ENCODE measurements at regions of chr17 and their contacts with region 1.

Region 1: DNA sequence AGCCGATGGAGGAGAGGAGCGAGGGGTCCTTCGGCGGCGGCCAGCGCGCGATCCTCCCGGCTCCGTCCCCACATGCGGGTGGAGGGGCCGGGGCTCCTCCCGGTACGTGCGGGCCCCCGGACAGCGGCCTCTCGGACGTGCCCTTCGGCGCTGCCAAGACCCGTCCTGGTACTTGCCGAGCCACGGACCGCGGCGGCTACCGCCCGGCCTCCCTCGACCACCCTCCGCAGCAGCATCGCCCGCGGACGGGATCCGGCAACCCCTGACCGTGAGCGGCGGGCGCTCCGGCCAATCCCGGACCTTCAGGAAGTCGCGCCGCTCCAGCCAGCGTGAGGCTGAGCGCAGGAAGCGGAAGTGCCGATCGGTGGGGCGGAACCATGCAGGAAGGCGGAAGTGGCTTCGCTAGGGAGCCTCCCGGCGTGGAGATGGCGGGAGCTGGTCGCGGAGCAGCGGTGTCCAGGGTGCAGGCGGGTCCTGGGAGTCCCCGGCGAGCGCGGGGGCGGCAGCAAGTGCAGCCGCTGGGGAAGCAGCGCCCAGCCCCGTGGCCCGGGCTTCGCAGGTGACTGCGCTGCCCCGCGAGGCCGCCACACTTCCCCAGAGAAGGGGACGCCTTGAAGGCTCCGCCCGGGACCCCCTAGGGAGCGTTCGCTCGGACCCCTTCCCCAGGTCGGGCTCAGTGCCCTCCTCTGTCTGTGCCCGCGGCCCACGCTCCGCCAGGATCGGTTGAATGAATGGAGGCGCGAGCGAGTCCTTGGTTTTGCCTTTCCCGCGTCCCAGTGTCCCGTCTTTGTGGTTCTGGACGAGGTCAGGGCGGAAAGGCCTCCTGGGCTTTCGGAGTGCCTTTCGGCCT is at the starts of genes CCDC137 and OXLD1:
- DNase-seq: peak; percentile 96
- H3K4me3 Mint-ChIP-seq: peak within 1 kb of the TSS; percentile 94
- H3K27ac Mint-ChIP-seq: peak within 1 kb of the TSS; percentile 94
- H3K4me1 Mint-ChIP-seq: peaks cover 41% of the 10 kb centered on the region
- H3K27me3 Mint-ChIP-seq: no peaks in the 10 kb centered on the region
- total RNA-seq, gene CCDC137: 34.0 to 36.8 TPM
- total RNA-seq, gene OXLD1: 49.6 to 57.7 TPM

Region 2: DNA sequence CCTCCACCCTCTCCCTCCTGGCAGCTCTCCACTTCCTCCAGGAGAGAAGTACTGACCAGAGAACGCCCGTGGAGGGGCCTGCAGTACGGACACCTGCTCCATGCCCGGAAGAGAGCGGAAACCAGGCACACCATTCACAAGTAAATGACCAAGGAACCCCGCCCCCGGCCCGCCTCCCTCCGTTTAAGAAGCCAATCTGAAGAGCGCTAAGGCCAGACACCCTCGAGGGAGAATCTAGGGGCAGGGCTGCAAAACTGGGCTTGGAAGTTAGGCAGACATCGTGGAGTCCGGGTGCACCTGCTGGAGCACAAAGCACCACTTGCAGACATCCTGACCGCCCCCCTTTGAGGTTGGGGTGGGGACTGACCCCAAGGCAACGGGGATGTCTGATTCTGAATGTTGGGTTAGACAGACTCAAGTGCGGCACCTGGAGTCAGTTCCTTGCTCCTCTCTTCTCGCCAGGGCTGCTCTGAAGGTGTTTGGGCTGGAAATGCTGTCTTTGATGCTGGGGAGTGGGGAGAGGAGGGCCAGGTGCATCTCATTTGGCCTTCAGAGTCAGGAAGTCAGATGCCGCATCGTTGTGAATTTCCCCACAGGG is 113.5 kb before region 1 on chr17:
- CTCF ChIA-PET with region 1: no interaction called
- POLR2A ChIA-PET with region 1: interaction called, 4 read pairs
- intact Hi-C with region 1: loop called (anchors 2 kb)
- DNase-seq: peak; percentile 88
- H3K4me3 Mint-ChIP-seq: peak overlapping the region; percentile 86
- H3K27ac Mint-ChIP-seq: peak overlapping the region; percentile 88
- H3K4me1 Mint-ChIP-seq: peaks cover 33% of the 10 kb centered on the region
- H3K27me3 Mint-ChIP-seq: no peaks in the 10 kb centered on the region

Region 3: DNA sequence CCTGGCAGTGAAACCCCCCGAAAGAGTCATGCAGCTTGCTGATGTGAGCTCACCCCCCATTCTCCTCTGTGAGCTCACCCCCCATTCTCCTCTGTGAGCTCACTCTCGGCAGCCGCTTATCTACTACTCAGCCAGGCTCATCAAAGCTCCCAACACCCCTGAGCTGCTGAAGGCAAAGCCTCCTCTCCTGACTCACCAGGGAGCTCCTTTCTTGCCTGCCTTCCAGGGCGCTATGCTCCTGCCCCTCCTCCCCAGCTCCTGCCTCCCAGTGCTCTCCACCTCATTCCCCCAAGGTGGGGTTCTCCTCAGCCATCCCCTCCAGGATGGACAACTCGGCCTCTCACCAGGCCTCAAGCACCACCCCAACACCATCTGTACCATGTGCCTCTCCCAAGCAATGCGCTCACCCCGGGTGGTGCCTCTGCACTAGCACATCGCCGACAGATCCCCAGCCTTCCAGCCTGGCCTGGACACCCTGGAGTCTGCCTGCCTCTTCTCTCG is 86.7 kb before region 1 on chr17:
- CTCF ChIA-PET with region 1: no interaction called
- POLR2A ChIA-PET with region 1: no interaction called
- intact Hi-C with region 1: no loop called
- DNase-seq: no peak
- H3K4me3 Mint-ChIP-seq: no peak overlapping the region
- H3K27ac Mint-ChIP-seq: peak overlapping the region; percentile 3
- H3K4me1 Mint-ChIP-seq: peaks cover 11% of the 10 kb centered on the region
- H3K27me3 Mint-ChIP-seq: no peaks in the 10 kb centered on the region

Region 4: GRCh38 chr17:81636505-81637288 is 29.9 kb before region 1 on chr17 and contains the starts of genes NPLOC4 and TSPAN10:
- CTCF ChIA-PET with region 1: no interaction called
- POLR2A ChIA-PET with region 1: interaction called, 5 read pairs
- intact Hi-C with region 1: loop called (anchors 2 kb)
- DNase-seq: peak; percentile 88
- H3K4me3 Mint-ChIP-seq: peak within 1 kb of the TSS; percentile 95
- H3K27ac Mint-ChIP-seq: peak within 1 kb of the TSS; percentile 82
- H3K4me1 Mint-ChIP-seq: peaks cover 27% of the 10 kb centered on the region
- H3K27me3 Mint-ChIP-seq: no peaks in the 10 kb centered on the region
- total RNA-seq, gene NPLOC4: 78.4 to 93.2 TPM
- total RNA-seq, gene TSPAN10: 0.36 to 0.45 TPM

Region 5: GRCh38 chr17:81676906-81677305 is 10.3 kb after region 1 on chr17:
- CTCF ChIA-PET with region 1: interaction called, 10 read pairs
- POLR2A ChIA-PET with region 1: no interaction called
- intact Hi-C with region 1: no loop called
- DNase-seq: no peak
- H3K4me3 Mint-ChIP-seq: no peak overlapping the region
- H3K27ac Mint-ChIP-seq: no peak overlapping the region
- H3K4me1 Mint-ChIP-seq: peaks cover 7% of the 10 kb centered on the region
- H3K27me3 Mint-ChIP-seq: no peaks in the 10 kb centered on the region

Region 6: GRCh38 chr17:81683584-81684237 is 17.1 kb after region 1 on chr17 and contains the starts of genes ARL16 and HGS:
- CTCF ChIA-PET with region 1: interaction called, 4 read pairs
- POLR2A ChIA-PET with region 1: interaction called, 26 read pairs
- intact Hi-C with region 1: loop called (anchors 1 kb)
- DNase-seq: peak; percentile 99
- H3K4me3 Mint-ChIP-seq: peak within 1 kb of the TSS; percentile 86
- H3K27ac Mint-ChIP-seq: peak within 1 kb of the TSS; percentile 86
- H3K4me1 Mint-ChIP-seq: peaks cover 32% of the 10 kb centered on the region
- H3K27me3 Mint-ChIP-seq: peaks cover 2% of the 10 kb centered on the region
- total RNA-seq, gene ARL16: 15.1 to 17.1 TPM
- total RNA-seq, gene HGS: 96.9 to 111 TPM

Region 7: DNA sequence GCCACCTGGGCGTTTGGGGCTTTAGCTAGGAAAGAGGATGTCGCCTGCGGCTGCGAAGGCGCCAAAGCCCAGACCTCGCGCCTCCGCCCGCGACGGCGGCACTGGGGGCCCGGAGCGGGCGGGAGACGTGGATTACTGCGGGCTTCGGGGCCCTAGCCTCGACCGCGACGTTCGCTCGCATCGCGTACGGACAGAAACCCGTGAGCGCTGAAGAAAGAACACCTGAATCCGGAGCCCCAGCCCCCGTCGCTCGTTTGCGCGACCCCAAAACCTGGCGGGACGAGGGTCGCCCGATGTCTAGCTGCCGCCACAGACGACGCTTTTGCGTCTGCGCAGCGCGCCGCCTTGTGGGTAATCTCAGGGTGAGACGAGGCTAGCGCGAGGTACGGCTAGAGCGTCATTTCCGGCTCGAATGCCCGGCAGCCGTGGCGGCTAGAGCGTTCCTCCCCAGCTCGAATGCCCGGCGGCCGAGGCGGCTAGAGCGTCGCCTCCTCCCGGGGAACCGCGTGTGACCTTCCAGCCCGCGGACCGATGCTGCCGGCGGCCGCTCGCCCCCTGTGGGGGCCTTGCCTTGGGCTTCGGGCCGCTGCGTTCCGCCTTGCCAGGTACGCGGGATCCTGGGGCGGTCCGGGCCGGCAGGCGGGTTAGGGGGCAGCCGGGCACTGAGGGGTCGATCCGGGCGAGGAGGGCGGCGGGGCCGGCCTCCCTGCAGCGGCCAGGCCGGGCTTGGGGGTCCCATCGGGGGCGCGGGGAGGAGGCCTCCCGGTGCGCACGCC is 36.6 kb after region 1 on chr17 and contains the start of gene MRPL12:
- CTCF ChIA-PET with region 1: no interaction called
- POLR2A ChIA-PET with region 1: interaction called, 10 read pairs
- intact Hi-C with region 1: no loop called
- DNase-seq: peak; percentile 93
- H3K4me3 Mint-ChIP-seq: peak within 1 kb of the TSS; percentile 94
- H3K27ac Mint-ChIP-seq: peak within 1 kb of the TSS; percentile 92
- H3K4me1 Mint-ChIP-seq: peaks cover 31% of the 10 kb centered on the region
- H3K27me3 Mint-ChIP-seq: no peaks in the 10 kb centered on the region
- total RNA-seq, gene MRPL12: 112 to 118 TPM

Region 8: DNA sequence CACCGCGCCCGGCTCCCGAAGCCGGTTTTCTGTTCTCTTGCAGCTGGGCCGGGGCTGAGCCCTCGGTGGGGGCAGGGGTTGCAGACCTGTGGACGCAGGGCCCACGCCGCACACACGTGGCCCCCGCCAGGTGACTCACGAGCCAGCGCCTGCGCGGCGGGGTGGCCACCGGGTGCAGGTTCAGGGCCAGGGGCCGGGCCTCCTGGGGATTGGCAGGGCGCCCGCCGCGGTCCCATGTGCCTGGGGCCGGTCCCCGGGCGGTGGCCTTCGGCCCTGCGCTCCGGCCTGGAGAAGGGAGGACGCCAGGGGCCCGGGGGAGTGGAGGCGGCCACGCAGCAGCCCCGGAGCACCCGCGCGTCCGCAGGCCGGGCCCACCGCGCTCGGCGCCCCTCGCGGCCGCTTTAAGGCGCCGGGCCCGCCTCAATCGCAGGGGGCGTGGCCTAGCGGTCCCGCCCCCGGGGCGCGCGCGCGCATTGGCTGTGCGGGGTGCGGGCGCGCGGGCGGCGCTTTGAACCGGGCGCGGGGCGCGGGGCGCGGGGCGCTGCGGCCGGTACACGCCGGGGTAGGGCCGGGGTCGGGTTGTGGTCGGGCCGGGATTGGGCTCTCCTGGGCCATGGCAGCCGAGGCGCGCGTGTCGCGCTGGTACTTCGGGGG is 45.4 kb after region 1 on chr17 and contains the start of gene SLC25A10:
- CTCF ChIA-PET with region 1: no interaction called
- POLR2A ChIA-PET with region 1: no interaction called
- intact Hi-C with region 1: loop called (anchors 5 kb)
- DNase-seq: peak; percentile 90
- H3K4me3 Mint-ChIP-seq: peak within 1 kb of the TSS; percentile 76
- H3K27ac Mint-ChIP-seq: peak within 1 kb of the TSS; percentile 54
- H3K4me1 Mint-ChIP-seq: peaks cover 21% of the 10 kb centered on the region
- H3K27me3 Mint-ChIP-seq: no peaks in the 10 kb centered on the region
- total RNA-seq, gene SLC25A10: 25.1 to 25.7 TPM

Region 9: GRCh38 chr17:81722184-81723120 is 55.9 kb after region 1 on chr17:
- CTCF ChIA-PET with region 1: no interaction called
- POLR2A ChIA-PET with region 1: no interaction called
- intact Hi-C with region 1: no loop called
- DNase-seq: no peak
- H3K4me3 Mint-ChIP-seq: no peak overlapping the region
- H3K27ac Mint-ChIP-seq: no peak overlapping the region
- H3K4me1 Mint-ChIP-seq: no peaks in the 10 kb centered on the region
- H3K27me3 Mint-ChIP-seq: peaks cover 18% of the 10 kb centered on the region

Measured in activated CD4-positive, alpha-beta memory T cell treated with anti-CD3 and anti-CD28 coated beads for 36 hours (primary cell).